ENCODE measurements at regions of chr13 and their contacts with region 1.

Region 1: GRCh38 chr13:43767341-43767931 is 19.3 kb downstream of the ENOX1 start:
- DNase-seq: no peak
- H3K4me3 ChIP-seq: no peak overlapping the region
- H3K27ac ChIP-seq: no peak overlapping the region
- H3K4me1 ChIP-seq: no peaks in the 10 kb centered on the region
- H3K27me3 ChIP-seq: no peaks in the 10 kb centered on the region
- CTCF ChIP-seq: no peak

Region 2: DNA sequence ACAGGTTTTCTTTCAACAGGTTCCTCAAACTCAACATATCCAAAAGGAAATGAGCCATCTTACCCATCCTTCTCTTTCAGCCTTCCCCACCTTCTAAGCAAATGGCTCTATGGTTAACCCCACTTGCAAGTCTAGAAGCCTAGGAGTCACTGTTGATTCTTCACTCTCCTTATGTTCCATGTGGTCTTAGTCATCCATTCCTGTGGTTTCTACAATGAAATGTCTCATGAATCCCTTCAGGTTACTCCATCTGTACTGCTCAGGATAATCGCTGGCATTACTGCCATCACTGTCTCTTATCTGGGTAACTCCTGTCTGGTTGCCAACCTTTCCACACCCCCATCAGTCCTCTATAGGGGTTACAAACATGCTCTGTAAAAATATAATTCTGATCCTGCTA is 362.0 kb before region 1 on chr13:
- CTCF ChIA-PET with region 1: no interaction called
- POLR2A ChIA-PET with region 1: no interaction called
- intact Hi-C with region 1: no loop called
- DNase-seq: peak; percentile 7 to 72
- H3K4me3 ChIP-seq: no peak overlapping the region
- H3K27ac ChIP-seq: no peak overlapping the region
- H3K4me1 ChIP-seq: no peaks in the 10 kb centered on the region
- H3K27me3 ChIP-seq: no peaks in the 10 kb centered on the region
- CTCF ChIP-seq: no peak

Region 3: DNA sequence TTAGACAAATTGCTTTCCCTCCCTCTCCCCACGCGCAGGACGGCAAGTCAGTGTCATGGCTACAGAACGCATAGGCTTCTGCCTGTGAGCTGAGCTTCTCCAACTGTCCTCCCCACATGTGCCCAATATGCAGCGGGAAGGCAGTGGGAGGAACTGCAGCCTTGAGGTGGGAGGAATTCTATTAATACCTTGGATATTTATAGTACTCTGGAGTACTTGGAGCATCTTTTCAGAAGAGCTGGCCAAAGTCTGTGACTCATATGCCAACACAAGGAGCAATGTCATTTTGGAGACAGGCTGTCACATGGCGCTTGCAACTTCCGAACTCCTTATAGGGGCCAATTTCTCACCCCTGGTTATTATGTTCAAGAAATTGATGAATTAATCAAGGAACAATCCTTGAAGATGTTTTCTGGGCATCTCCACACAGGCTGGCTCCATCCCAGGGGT is 361.1 kb after region 1 on chr13:
- CTCF ChIA-PET with region 1: interaction called, 10 read pairs
- POLR2A ChIA-PET with region 1: no interaction called
- intact Hi-C with region 1: no loop called
- DNase-seq: no peak
- H3K4me3 ChIP-seq: no peak overlapping the region
- H3K27ac ChIP-seq: no peak overlapping the region
- H3K4me1 ChIP-seq: no peaks in the 10 kb centered on the region; the same call in 1 of the 2 replicates
- H3K27me3 ChIP-seq: no peaks in the 10 kb centered on the region
- CTCF ChIP-seq: no peak

Region 4: GRCh38 chr13:44857061-44857460 is 1089.6 kb after region 1 on chr13:
- CTCF ChIA-PET with region 1: no interaction called
- POLR2A ChIA-PET with region 1: no interaction called
- intact Hi-C with region 1: no loop called
- DNase-seq: no peak
- H3K4me3 ChIP-seq: no peak overlapping the region
- H3K27ac ChIP-seq: no peak overlapping the region
- H3K4me1 ChIP-seq: peaks cover 28% of the 10 kb centered on the region
- H3K27me3 ChIP-seq: no peaks in the 10 kb centered on the region
- CTCF ChIP-seq: no peak